Prostate gland (tissue), 2 donors: ENCODE measurements at regions of chrX and their contacts with region 1.

Region 1: GRCh38 chrX:153947009-153947769 is 2.7 kb upstream of the RENBP start:
- DNase-seq: no peak
- H3K4me3 ChIP-seq: no peak overlapping the region
- H3K27ac ChIP-seq: no peak overlapping the region
- H3K4me1 ChIP-seq: no peaks in the 10 kb centered on the region
- H3K27me3 ChIP-seq: no peaks in the 10 kb centered on the region
- CTCF ChIP-seq: peak; percentile 52 to 83 (median 72)
- POLR2A ChIP-seq: no peak

Region 2: DNA sequence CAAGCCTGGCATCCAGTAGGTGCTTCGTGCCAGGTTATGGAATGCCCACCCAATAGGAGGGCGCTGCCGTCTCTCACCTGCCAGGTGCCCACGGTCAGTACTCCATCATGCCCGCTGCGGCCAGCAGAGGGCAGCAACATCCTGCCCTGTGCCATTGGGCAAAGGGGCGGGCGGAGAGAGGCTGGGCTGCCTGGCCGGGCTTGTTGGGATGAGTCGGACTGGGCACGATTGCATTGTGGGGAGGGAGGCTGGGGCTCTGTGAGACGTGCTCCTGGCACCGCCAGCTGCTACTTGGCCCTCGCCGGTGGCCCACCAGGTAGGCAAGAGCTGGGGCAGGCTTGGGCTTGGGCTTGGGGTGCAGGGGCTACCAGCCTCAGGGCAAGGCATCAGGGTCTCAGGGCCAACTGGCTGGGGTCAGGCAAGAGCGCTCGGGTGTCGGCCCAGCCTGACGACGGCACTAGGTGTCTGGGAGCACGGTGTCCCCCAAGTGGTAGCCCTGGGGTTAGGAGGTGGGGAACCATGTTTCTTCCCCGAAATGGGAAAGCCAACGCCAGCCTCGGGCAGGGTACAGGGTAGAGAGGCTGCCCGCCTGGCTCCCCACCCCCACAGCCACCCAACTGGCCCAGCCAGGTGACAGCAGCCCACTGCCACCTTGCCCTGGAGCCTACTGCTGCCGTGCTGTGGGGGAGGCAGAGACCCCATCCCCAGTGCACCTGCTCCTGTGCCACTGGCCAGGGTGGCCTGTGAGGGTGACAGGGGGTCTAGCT is 183.0 kb before region 1 on chrX and contains the start of gene PLXNB3:
- intact Hi-C with region 1: loop called (anchors 5 kb)
- DNase-seq: peak; percentile 79
- H3K4me3 ChIP-seq: peak within 1 kb of the TSS; percentile 21 to 34
- H3K27ac ChIP-seq: peak within 1 kb of the TSS; percentile 58
- H3K4me1 ChIP-seq: no peaks in the 10 kb centered on the region
- H3K27me3 ChIP-seq: no peaks in the 10 kb centered on the region
- CTCF ChIP-seq: peak; percentile 51 to 91 (median 83)
- POLR2A ChIP-seq: peak; percentile 50
- total RNA-seq, gene PLXNB3: 20.9 to 52.7 TPM